B cell (primary cell): ENCODE measurements at regions of chr11 and their contacts with region 1.

Region 1: GRCh38 chr11:18321980-18322711 is at the starts of genes GTF2H1 and HPS5:
- DNase-seq: peak; percentile 100
- ATAC-seq: peak; percentile 87
- H3K4me3 ChIP-seq: peak within 1 kb of the TSS; percentile 82 to 94 (median 90)
- H3K4me3 Mint-ChIP-seq: peak within 1 kb of the TSS; percentile 96
- H3K27ac ChIP-seq: peak within 1 kb of the TSS; percentile 98 to 100
- H3K27ac Mint-ChIP-seq: peak within 1 kb of the TSS; percentile 100
- H3K4me1 ChIP-seq: peaks cover 39 to 54% of the 10 kb centered on the region in 2 donors
- H3K4me1 Mint-ChIP-seq: peaks cover 76% of the 10 kb centered on the region
- H3K27me3 ChIP-seq: no peaks in the 10 kb centered on the region
- H3K27me3 Mint-ChIP-seq: no peaks in the 10 kb centered on the region
- CTCF ChIP-seq: no peak
- total RNA-seq, gene GTF2H1: 71.9 and 74.7 TPM in 2 replicates
- total RNA-seq, gene HPS5: 31.3 and 38.4 TPM in 2 replicates

Region 2: DNA sequence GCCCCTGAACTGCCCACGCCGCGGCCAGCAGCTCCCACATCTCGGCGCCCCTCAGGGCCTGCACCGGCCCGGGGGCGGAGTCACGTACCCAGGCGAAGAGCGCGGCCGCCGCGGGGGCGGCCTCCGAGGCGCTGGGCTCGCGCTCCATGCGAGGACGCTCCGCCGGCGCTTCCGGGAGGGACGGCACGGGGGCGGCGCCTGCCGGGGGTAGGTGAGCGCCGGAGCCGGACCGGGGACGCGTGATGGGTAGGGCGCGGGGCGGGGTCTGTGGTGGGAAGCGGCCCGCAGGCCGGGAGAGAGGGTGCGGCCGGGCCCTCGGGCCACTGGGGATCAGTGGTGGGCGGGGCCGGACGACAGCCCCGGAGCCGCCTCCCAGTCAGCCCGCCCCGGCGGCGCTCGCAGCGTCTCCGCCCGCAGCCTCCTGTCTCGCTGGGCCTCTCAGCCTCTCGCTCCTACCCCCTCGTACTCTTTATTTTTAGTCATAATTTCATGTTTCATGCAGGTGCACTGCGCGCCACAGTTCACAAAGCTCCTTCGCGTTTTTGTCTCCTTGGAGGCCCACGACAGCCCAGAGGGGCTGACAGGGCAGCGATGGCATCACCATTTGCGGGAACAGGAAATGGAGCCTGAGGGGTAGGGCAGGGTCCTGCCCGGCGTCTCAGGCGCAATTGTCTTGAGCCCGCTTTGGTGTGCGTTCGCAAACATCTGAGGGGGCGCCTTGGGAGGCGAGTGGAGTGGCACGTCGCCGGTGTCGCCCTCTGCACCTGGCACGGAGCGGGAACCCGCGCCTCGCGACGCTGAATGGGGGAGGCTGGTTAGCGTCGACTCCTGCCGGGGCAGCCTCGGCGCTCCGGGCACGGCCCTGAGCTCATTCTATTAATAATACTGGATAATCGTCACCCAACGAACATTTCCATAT is 309.0 kb before region 1 on chr11 and contains the start of gene SERGEF:
- CTCF ChIA-PET with region 1: no interaction called
- POLR2A ChIA-PET with region 1: no interaction called
- intact Hi-C with region 1: loop called (anchors 2 kb)
- DNase-seq: peak; percentile 95
- ATAC-seq: peak; percentile 90
- H3K4me3 ChIP-seq: peak within 1 kb of the TSS; percentile 77 to 90 (median 83)
- H3K4me3 Mint-ChIP-seq: peak within 1 kb of the TSS; percentile 100
- H3K27ac ChIP-seq: peak within 1 kb of the TSS; percentile 61 to 65
- H3K27ac Mint-ChIP-seq: peak within 1 kb of the TSS; percentile 99
- H3K4me1 ChIP-seq: peaks cover 9 to 21% of the 10 kb centered on the region in 2 donors
- H3K4me1 Mint-ChIP-seq: peaks cover 27% of the 10 kb centered on the region
- H3K27me3 ChIP-seq: no peaks in the 10 kb centered on the region
- H3K27me3 Mint-ChIP-seq: no peaks in the 10 kb centered on the region
- CTCF ChIP-seq: no peak
- total RNA-seq, gene SERGEF: 52.5 and 54.3 TPM in 2 replicates

Region 3: DNA sequence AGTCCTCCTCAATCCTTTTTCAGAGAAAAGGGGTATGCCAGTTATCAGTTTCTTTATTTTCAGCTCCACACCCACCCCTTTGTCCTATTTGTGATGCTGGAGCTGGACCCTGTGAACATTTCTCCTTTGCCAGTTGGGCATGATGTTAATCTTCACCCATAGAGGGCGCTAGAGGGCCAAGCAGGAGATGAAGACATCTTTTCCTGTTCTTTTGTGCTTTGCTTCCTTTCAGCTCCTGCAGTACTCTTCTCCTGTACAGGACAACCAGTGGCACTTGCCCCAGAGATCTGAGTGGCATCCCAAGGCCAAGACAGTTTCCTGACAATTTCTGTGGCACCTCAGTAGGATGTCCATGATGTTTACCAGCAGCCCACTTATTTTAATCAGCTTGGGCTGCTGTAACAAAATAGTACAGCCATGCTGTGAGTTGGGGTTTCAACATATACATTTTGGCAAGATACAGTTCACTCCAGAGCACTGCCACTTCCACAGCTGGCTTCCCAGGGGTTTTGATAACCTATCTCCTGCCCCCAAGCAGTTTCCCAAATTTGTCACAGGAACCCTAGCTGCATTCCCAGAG is 78.3 kb before region 1 on chr11:
- CTCF ChIA-PET with region 1: interaction called, 4 read pairs
- POLR2A ChIA-PET with region 1: no interaction called
- intact Hi-C with region 1: loop called (anchors 2 kb)
- DNase-seq: peak; percentile 77
- ATAC-seq: no peak
- H3K4me3 ChIP-seq: no peak overlapping the region
- H3K4me3 Mint-ChIP-seq: no peak overlapping the region
- H3K27ac ChIP-seq: no peak overlapping the region
- H3K27ac Mint-ChIP-seq: peak overlapping the region; percentile 12
- H3K4me1 ChIP-seq: peaks cover 2 to 19% of the 10 kb centered on the region in 2 donors
- H3K4me1 Mint-ChIP-seq: peaks cover 15% of the 10 kb centered on the region
- H3K27me3 ChIP-seq: peaks cover 0 to 7% (median 6%) of the 10 kb centered on the region in 4 experiments
- H3K27me3 Mint-ChIP-seq: peaks cover 14% of the 10 kb centered on the region
- CTCF ChIP-seq: peak; percentile 90

Region 4: DNA sequence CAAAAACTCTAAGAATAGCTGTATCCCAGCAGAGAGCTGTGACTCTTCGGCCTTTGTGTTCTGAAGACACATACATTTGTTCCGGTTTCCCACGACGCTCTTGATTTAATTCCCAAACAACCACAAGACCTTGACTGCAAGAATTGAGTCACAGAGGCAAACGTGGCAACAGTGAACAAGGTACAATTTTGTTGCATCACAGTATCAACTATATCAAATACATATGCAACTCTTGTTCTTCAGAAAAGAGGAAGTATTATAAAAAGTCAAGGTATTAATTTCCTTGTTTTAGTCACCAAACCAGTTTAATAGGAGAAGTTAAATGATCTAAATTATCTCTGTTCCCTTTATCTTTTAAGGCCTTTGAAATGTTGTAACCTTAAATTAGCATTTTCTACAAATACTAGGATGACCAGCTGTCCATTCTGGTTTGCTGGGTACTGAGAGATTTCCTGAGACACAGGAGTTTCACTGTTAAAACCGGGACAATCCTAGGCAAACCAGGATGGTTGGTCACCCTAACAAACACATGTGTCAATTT is 11.3 kb before region 1 on chr11:
- CTCF ChIA-PET with region 1: interaction called, 11 read pairs
- POLR2A ChIA-PET with region 1: no interaction called
- intact Hi-C with region 1: loop called (anchors 1 kb)
- DNase-seq: peak; percentile 45
- ATAC-seq: peak; percentile 61
- H3K4me3 ChIP-seq: no peak overlapping the region
- H3K4me3 Mint-ChIP-seq: peak overlapping the region; percentile 1
- H3K27ac ChIP-seq: peak overlapping the region; percentile 49 to 83
- H3K27ac Mint-ChIP-seq: peak overlapping the region; percentile 29
- H3K4me1 ChIP-seq: peaks cover 13 to 23% of the 10 kb centered on the region in 2 donors
- H3K4me1 Mint-ChIP-seq: peaks cover 24% of the 10 kb centered on the region
- H3K27me3 ChIP-seq: no peaks in the 10 kb centered on the region
- H3K27me3 Mint-ChIP-seq: no peaks in the 10 kb centered on the region
- CTCF ChIP-seq: no peak

Region 5: GRCh38 chr11:18526521-18527296 is 204.6 kb after region 1 on chr11 and contains the start of gene TSG101:
- CTCF ChIA-PET with region 1: no interaction called
- POLR2A ChIA-PET with region 1: no interaction called
- intact Hi-C with region 1: loop called (anchors 1 kb)
- DNase-seq: peak; percentile 98
- ATAC-seq: peak; percentile 82
- H3K4me3 ChIP-seq: peak within 1 kb of the TSS; percentile 82 to 94 (median 84)
- H3K4me3 Mint-ChIP-seq: peak within 1 kb of the TSS; percentile 100
- H3K27ac ChIP-seq: peak within 1 kb of the TSS; percentile 97 to 99
- H3K27ac Mint-ChIP-seq: peak within 1 kb of the TSS; percentile 99
- H3K4me1 ChIP-seq: peaks cover 14% of the 10 kb centered on the region in 2 donors
- H3K4me1 Mint-ChIP-seq: peaks cover 45% of the 10 kb centered on the region
- H3K27me3 ChIP-seq: no peaks in the 10 kb centered on the region
- H3K27me3 Mint-ChIP-seq: no peaks in the 10 kb centered on the region
- CTCF ChIP-seq: no peak
- total RNA-seq, gene TSG101: 49.6 and 50.9 TPM in 2 replicates

Region 6: GRCh38 chr11:18634140-18635032 is 312.2 kb after region 1 on chr11 and contains the start of gene SPTY2D1:
- CTCF ChIA-PET with region 1: no interaction called
- POLR2A ChIA-PET with region 1: no interaction called
- intact Hi-C with region 1: loop called (anchors 1 kb)
- DNase-seq: peak; percentile 98
- ATAC-seq: peak; percentile 95
- H3K4me3 ChIP-seq: peak within 1 kb of the TSS; percentile 64 to 95 (median 91)
- H3K4me3 Mint-ChIP-seq: peak within 1 kb of the TSS; percentile 99
- H3K27ac ChIP-seq: peak within 1 kb of the TSS; percentile 75 to 97
- H3K27ac Mint-ChIP-seq: peak within 1 kb of the TSS; percentile 98
- H3K4me1 ChIP-seq: peaks cover 14 to 16% of the 10 kb centered on the region in 2 donors
- H3K4me1 Mint-ChIP-seq: peaks cover 23% of the 10 kb centered on the region
- H3K27me3 ChIP-seq: no peaks in the 10 kb centered on the region
- H3K27me3 Mint-ChIP-seq: peaks cover 8% of the 10 kb centered on the region
- CTCF ChIP-seq: no peak
- total RNA-seq, gene SPTY2D1: 16.5 and 17.8 TPM in 2 replicates